Heart left ventricle (tissue), 16 donors: ENCODE measurements at regions of chr7 and their contacts with region 1.

Region 1: DNA sequence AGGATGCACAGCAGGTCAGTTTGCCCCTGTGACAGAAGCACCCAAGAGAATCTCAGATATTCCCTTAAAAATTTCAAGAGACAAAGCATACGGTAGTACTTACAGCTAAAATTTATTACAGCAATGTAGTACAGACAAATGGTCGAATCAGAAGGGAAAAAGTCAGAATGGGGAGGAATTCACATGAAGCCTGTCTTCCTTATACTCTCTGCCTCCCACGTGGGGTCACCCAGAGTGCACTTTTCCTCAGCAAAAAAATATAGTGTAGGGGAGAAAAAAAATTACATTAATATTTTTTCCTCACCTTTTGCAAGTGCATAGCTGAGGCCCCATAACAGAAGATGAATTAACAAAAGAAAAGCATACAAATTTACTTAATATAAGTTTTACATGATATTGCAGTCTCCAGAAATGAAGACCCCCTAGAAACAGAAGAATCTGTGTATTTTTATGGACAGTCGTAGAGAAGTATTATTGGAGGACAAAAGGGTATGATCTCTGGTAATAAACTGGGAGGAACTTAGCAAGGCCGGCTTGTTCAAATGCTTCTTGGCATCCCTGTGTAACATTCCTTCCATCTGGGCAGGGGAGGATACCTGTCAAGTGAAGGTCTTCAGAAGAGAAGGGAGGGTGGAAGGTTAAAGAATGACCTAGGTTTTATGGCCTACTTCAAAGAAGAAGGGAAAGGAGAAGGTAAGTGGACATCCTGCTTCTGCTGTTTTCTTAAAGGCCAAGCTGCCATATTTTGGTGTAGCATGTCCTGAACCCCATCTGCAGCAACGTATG is 270.6 kb upstream of the MAGI2 start:
- DNase-seq: no peak
- ATAC-seq: no peak
- H3K4me3 ChIP-seq: no peak overlapping the region
- H3K27ac ChIP-seq: no peak overlapping the region
- H3K4me1 ChIP-seq: no peaks in the 10 kb centered on the region
- H3K27me3 ChIP-seq: no peaks in the 10 kb centered on the region
- CTCF ChIP-seq: no peak
- POLR2A ChIP-seq: no peak

Region 2: GRCh38 chr7:79553811-79554555 is 170.0 kb before region 1 on chr7:
- intact Hi-C with region 1: no loop called
- DNase-seq: no peak
- ATAC-seq: no peak
- H3K4me3 ChIP-seq: no peak overlapping the region
- H3K27ac ChIP-seq: no peak overlapping the region
- H3K4me1 ChIP-seq: no peaks in the 10 kb centered on the region
- H3K27me3 ChIP-seq: no peaks in the 10 kb centered on the region
- CTCF ChIP-seq: no peak
- POLR2A ChIP-seq: no peak

Region 3: DNA sequence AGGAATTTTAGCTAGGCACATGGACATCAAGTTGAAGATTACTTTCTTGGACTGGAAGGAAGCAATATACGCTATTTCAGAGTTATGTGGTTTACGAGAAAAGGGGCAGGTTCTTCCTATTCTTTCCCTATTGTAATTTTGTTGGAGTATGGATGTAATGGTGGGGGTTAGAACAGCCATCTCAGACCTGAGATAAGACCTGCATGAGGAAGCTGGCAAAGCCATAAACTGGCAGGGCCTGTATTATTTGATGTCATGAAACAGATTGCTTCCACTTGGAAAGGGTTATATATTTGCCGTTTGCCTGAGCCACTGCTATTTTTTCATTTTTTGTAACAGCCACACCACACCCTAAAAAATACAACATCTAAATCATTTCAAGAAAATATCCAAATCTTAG is 50.1 kb before region 1 on chr7:
- intact Hi-C with region 1: loop called in 1 of 10 experiments (anchors 5 kb)
- DNase-seq: no peak
- ATAC-seq: no peak
- H3K4me3 ChIP-seq: no peak overlapping the region
- H3K27ac ChIP-seq: no peak overlapping the region
- H3K4me1 ChIP-seq: no peaks in the 10 kb centered on the region
- H3K27me3 ChIP-seq: no peaks in the 10 kb centered on the region
- CTCF ChIP-seq: no peak
- POLR2A ChIP-seq: no peak

Region 4: DNA sequence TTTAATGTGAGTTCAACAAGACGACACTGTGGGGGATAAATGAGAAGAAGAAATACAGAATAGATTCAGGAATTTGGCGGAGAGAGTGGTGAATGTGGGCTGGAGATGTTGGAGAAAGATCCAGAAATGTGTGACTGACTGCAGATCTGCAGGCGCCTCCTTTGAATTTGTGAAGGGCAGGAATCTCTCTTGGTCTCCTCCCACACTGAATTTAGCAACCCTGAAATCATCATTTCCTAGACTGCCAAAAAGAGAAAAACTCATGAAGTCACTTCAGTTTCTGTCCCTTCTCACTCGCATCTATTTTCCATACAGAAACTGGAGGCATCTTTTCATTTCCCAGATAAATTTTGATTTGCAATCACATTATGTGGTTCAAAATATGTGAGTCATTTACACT is 539.3 kb after region 1 on chr7:
- intact Hi-C with region 1: no loop called
- DNase-seq: no peak
- ATAC-seq: peak in 2 of 4 donors; percentile 34 to 37
- H3K4me3 ChIP-seq: peak overlapping the region in 1 of 12 donors; percentile 30
- H3K27ac ChIP-seq: no peak overlapping the region
- H3K4me1 ChIP-seq: no peaks in the 10 kb centered on the region
- H3K27me3 ChIP-seq: no peaks in the 10 kb centered on the region
- CTCF ChIP-seq: no peak
- POLR2A ChIP-seq: no peak